GM10248 (cell line): ENCODE measurements at regions of chr4 and their contacts with region 1.

Region 1: DNA sequence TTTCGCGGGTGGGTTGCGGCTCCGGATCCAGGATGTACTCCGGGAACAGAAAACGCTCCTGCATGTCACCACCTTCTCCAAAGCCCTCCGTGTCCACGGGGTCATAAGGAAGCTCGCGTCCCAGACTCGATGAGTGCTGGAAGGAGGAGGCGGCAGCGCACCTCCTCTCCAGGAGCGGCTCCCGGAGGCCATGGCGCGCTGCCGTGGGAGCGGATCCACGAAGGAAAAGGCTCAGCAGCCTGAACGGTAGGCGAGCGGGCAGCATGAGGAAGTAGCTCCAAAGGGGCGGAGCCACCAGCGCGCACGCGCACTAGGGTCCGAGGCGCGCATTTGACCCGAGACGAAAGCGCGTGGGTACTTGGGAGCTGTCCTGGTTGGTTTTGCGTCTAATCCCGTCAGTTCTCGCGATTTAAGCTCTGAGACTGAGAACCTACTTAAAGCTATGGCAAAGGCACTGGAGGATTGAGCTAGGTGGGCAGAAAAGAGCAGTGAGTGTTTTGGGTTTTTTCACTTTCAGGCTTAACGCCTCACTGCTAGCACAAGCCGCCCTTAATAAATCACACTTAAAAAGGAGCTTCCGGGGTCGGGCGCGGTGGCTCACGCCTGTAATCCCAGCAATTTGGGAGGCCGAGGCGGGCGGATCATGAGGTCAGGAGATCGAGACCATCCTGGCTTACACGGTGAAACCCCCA is at the start of gene NOA1:
- DNase-seq: peak; percentile 94
- CTCF ChIP-seq: no peak

Region 2: GRCh38 chr4:56821381-56822243 is 155.9 kb before region 1 on chr4 and contains the start of gene SPINK2:
- CTCF ChIA-PET with region 1: no interaction called
- POLR2A ChIA-PET with region 1: no interaction called
- DNase-seq: peak; percentile 48
- CTCF ChIP-seq: no peak

Region 3: DNA sequence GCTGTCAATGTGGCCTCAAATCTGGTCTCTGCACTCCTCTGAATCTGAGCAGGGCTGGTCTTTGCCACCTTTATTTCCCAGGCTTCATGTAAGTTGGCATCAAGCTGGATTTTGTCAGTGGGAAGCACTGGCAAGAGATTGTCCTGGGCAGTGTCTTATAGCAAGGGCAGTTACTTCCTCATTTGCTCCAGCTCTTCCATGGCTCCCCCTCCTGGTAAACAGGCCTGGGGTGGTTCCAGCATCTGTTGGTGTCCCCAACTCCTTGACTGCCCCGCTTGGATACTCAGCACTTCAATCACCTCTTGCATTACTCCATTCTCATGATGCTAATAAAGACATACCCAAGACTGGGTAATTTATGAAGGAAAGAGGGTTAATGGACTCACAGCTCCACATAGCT is 84.8 kb before region 1 on chr4:
- CTCF ChIA-PET with region 1: no interaction called
- POLR2A ChIA-PET with region 1: no interaction called
- DNase-seq: no peak
- CTCF ChIP-seq: no peak

Region 4: DNA sequence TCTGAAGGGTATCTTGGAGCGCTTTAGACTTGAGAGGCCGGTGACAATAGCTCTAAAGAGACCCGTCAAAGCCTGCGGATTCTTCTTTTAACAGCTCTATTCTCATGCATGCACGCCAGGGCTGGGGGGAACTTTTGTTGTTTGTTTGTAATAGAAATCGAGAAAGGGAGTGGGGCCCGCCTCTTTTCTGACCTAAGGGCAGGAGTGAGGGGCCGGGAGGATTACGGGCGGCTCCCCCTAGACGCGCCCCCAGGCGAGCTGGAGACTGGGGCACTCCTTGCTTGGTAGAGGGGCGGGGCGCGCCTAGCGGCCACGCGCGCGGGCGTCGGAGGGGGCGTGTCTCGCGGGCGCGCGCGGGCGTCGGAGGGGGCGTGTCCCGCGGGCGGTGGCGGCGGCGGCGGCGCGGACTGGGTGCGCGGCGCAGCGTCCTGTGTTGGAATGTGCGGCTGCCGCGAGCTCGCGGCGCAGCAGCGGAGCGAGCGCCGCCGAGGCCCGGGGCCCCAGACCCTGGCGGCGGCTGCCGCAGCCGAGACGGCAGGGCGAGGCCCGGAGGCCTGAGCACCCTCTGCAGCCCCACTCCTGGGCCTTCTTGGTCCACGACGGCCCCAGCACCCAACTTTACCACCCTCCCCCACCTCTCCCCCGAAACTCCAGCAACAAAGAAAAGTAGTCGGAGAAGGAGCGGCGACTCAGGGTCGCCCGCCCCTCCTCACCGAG is 69.8 kb before region 1 on chr4 and contains the start of gene REST:
- CTCF ChIA-PET with region 1: interaction called, 26 read pairs
- POLR2A ChIA-PET with region 1: interaction called, 25 read pairs
- DNase-seq: peak; percentile 85
- CTCF ChIP-seq: no peak

Region 5: GRCh38 chr4:56961107-56961500 is 16.4 kb before region 1 on chr4:
- CTCF ChIA-PET with region 1: interaction called, 18 read pairs
- POLR2A ChIA-PET with region 1: interaction called, 5 read pairs
- DNase-seq: no peak
- CTCF ChIP-seq: no peak

Region 6: GRCh38 chr4:56990109-56990905 is 12.8 kb after region 1 on chr4:
- CTCF ChIA-PET with region 1: interaction called, 10 read pairs
- POLR2A ChIA-PET with region 1: interaction called, 12 read pairs
- DNase-seq: no peak
- CTCF ChIP-seq: no peak